H1 (cell line): ENCODE measurements at regions of chr3 and their contacts with region 1.

Region 1: DNA sequence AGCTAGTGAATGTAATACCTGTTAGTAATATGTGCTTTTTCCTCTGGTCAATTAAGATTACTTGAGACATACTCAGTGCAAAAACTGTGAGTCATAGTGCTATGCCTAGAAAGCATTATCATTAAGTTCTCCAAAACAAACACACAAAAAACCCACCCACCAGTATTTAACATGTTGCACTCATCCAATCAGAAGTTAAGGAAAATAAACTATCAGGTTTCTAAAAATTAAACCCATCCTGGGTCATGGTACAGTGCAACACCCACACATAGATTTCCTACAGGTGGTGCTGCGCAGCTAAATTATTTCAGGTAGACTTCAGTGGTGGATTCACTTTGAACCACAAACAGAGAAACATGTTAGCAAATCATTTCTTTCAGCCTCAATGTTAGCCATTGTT is 264.4 kb upstream of the VEPH1 start:
- DNase-seq: no peak
- H3K4me3 ChIP-seq: no peak overlapping the region
- H3K27ac ChIP-seq: no peak overlapping the region
- H3K4me1 ChIP-seq: no peaks in the 10 kb centered on the region
- H3K27me3 ChIP-seq: no peaks in the 10 kb centered on the region
- CTCF ChIP-seq: no peak
- EP300 ChIP-seq: no peak
- POLR2A ChIP-seq: no peak
- RAD21 ChIP-seq: no peak

Region 2: GRCh38 chr3:157502916-157503595 is 264.5 kb before region 1 on chr3 and contains the start of gene VEPH1:
- CTCF ChIA-PET with region 1: no interaction called
- POLR2A ChIA-PET with region 1: no interaction called
- DNase-seq: no peak
- H3K4me3 ChIP-seq: no peak within 1 kb of the TSS
- H3K27ac ChIP-seq: no peak within 1 kb of the TSS
- H3K4me1 ChIP-seq: peaks cover 4 to 21% (median 16%) of the 10 kb centered on the region in 4 experiments; a peak in 5 of 7 replicates
- H3K27me3 ChIP-seq: no peaks in the 10 kb centered on the region
- CTCF ChIP-seq: no peak
- EP300 ChIP-seq: no peak
- POLR2A ChIP-seq: no peak
- RAD21 ChIP-seq: no peak
- total RNA-seq, gene VEPH1: 10.9 and 18.3 TPM in 2 replicates

Region 3: DNA sequence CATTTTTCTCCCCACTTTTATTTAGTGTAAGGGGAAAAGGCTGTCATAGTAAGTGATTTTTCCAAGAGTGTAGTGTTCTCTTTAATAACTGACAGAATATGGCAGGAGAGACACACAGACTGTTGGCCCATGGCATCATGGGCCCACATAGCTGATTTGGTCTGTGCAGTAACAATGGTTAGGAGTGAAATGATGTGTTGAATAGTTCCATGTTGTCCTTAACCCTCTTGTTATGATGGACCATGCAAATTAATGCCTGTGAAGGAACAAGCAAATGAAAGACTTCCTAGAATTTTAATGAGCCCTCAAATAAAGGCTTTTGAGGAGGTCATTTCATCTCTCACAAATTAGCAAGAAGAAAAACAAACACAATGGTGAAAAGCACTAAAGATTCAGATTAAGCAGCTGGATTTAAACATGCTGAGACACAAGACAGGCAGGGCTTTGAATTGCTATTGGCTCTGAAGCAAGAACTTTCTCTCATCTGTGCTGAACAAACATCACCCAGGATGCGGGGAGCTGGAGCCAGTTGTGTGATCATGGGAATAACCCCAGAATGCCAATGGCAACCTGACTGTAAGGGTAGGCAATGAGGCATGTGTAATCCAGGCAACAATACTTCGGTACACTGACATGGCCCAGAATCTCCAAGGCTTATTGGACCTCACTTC is 127.7 kb before region 1 on chr3:
- CTCF ChIA-PET with region 1: no interaction called
- POLR2A ChIA-PET with region 1: no interaction called
- DNase-seq: no peak
- H3K4me3 ChIP-seq: no peak overlapping the region
- H3K27ac ChIP-seq: no peak overlapping the region
- H3K4me1 ChIP-seq: no peaks in the 10 kb centered on the region
- H3K27me3 ChIP-seq: no peaks in the 10 kb centered on the region
- CTCF ChIP-seq: no peak
- EP300 ChIP-seq: no peak
- POLR2A ChIP-seq: no peak
- RAD21 ChIP-seq: no peak

Region 4: DNA sequence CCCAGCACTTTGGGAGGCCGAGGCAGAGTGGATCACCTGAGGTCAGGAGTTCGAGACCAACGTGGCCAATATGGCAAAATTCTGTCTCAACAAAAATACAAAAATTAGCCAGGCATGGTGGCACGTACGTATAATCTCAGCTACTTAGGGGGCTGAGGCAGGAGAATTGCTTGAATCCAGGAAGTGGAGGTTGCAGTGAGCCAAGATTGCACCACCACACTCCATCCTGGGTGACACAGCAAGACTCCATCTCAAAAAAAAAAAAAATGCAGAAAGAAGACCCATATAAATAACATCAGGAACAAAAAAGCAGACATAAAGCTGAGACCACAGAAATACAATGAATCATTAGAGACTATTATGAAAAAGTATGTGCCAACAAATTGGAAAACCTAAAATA is 29.2 kb before region 1 on chr3:
- CTCF ChIA-PET with region 1: no interaction called
- POLR2A ChIA-PET with region 1: no interaction called
- DNase-seq: no peak
- H3K4me3 ChIP-seq: no peak overlapping the region
- H3K27ac ChIP-seq: no peak overlapping the region
- H3K4me1 ChIP-seq: no peaks in the 10 kb centered on the region
- H3K27me3 ChIP-seq: no peaks in the 10 kb centered on the region
- CTCF ChIP-seq: no peak
- EP300 ChIP-seq: no peak
- POLR2A ChIP-seq: no peak
- RAD21 ChIP-seq: no peak

Region 5: DNA sequence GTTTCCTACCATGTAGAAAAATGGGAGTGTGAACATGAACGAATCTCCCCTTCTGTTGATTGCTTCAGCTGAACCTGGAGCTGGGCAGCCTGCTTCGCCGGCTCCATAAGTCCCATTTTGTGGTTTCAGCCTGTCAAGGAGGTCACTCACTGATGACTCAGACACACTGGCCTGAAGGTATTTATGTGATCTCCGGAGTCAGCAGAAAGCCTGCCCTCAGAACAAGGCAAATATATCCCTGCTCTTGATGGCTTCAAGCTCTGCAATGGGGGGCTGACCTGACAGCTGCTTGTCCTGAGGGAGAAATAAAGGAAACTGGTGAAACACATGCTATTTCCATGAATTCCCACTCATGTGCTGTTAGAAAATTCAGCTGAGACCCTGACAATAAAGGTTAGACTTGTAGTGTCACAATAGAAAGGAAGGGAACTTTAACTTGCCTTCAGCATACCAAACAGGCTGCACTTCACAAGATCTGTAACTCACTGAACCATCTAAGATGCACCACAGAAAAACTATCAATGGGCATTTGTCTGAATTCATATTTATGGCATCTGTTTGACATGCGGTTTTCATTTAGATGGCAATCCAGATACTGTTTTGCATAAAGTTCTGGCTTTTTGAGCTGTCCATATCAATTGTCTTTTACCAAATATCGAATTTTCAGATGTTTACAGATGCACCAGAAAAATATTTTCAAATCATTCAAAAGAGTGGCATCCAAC is 17.7 kb after region 1 on chr3:
- CTCF ChIA-PET with region 1: interaction called, 11 read pairs
- POLR2A ChIA-PET with region 1: no interaction called
- DNase-seq: no peak
- H3K4me3 ChIP-seq: no peak overlapping the region
- H3K27ac ChIP-seq: no peak overlapping the region
- H3K4me1 ChIP-seq: no peaks in the 10 kb centered on the region
- H3K27me3 ChIP-seq: peaks cover 0 to 1% (median 0%) of the 10 kb centered on the region in 4 experiments; a peak in 1 of 7 replicates
- CTCF ChIP-seq: no peak
- EP300 ChIP-seq: no peak
- POLR2A ChIP-seq: no peak
- RAD21 ChIP-seq: no peak